ENCODE measurements at regions of chr2 and their contacts with region 1.

Region 1: GRCh38 chr2:43595603-43596412 is at the start of gene THADA:
- DNase-seq: peak; percentile 99
- ATAC-seq: peak; percentile 99 to 100
- H3K4me3 ChIP-seq: peak within 1 kb of the TSS; percentile 62 to 86 (median 81)
- H3K27ac ChIP-seq: peak within 1 kb of the TSS; percentile 85 to 91 (median 88)
- H3K4me1 ChIP-seq: peaks cover 7 to 13% of the 10 kb centered on the region in 2 donors
- H3K27me3 ChIP-seq: no peaks in the 10 kb centered on the region
- CTCF ChIP-seq: no peak
- POLR2A ChIP-seq: peak; percentile 78 to 86
- total RNA-seq, gene THADA: 13.6 to 19.0 (median 16.2) TPM

Region 2: DNA sequence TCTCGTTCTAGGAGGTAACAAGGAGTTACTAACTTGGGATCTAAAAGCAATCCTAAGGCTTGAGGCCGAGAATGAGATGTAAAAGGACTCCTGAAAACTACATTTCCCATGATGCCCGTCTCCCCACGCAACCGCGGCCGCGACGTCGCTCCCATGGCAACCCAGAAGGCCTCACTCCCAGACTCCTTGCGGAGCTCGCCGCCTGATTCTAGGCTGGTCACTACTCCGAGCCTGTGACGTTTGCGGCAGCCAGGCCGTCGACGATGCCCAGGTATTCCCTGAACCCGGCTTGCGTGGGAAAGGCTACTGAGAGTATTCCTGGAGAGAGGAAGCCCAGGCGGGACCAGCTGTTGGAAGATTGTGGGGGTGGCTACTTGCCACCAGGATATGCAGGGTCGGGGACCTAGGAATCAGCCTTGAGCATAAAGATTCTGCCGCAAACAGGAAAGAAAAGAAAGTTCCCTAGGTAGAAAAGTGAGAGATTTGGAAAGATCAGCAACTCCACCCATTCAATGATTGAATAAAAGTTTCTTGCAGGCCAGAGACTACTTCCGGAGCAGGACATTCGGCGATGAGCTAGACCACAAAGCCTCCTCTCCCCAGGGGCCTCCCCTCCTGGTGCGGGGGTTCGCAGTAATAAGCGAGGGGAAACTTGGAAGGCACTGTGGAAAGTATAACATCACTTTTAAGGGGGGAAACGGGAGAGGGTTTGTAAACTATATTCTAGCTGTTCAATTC is 178.2 kb after region 1 on chr2 and contains the start of gene DYNC2LI1:
- in situ Hi-C with region 1: no loop called
- intact Hi-C with region 1: loop called (anchors 10 kb)
- DNase-seq: peak; percentile 81 to 86
- ATAC-seq: peak; percentile 97 to 99
- H3K4me3 ChIP-seq: peak within 1 kb of the TSS; percentile 67 to 97 (median 82)
- H3K27ac ChIP-seq: peak within 1 kb of the TSS; percentile 76 to 88 (median 81)
- H3K4me1 ChIP-seq: peaks cover 3 to 6% of the 10 kb centered on the region in 2 donors
- H3K27me3 ChIP-seq: no peaks in the 10 kb centered on the region
- CTCF ChIP-seq: no peak
- POLR2A ChIP-seq: no peak
- total RNA-seq, gene DYNC2LI1: 8.1 to 13.1 (median 10.2) TPM